IMR-90 (cell line): ENCODE measurements at regions of chr18 and their contacts with region 1.

Region 1: DNA sequence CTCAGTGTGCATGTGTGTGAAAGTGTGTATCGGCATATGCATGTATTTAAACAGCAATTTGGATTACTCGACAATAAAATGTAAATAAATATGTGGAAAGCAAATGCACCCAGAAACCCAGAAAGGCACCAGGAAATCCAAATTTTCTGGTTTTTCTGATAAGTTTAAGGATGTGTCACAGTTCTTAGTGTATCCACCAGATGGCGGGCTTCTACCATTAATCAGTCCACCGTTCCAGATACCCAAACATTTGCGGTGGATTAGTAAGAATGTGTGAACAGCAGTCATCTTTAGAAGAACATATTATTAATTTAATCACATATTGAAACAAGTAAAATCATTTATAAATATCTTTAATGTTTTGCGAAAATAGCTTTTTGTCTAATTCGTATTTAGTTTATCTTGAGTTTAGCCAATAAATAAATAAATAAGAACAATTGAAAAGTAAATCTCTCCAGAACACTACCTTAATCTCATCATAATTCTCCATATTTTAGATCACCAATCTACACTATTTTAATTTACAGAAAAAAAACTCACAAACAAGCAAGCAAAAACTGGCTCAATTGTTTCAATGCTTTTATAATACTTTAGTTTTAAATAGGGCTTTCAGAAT is 298.9 kb downstream of the DSEL start:
- DNase-seq: peak; percentile 78
- ATAC-seq: peak; percentile 95
- H3K4me3 ChIP-seq: no peak overlapping the region
- H3K27ac ChIP-seq: no peak overlapping the region
- H3K4me1 ChIP-seq: no peaks in the 10 kb centered on the region
- H3K27me3 ChIP-seq: no peaks in the 10 kb centered on the region
- CTCF ChIP-seq: peak; percentile 86
- POLR2A ChIP-seq: 0 out of 2 replicates have a peak, but pooled peaks have one; percentile 32
- RAD21 ChIP-seq: peak; percentile 94

Region 2: DNA sequence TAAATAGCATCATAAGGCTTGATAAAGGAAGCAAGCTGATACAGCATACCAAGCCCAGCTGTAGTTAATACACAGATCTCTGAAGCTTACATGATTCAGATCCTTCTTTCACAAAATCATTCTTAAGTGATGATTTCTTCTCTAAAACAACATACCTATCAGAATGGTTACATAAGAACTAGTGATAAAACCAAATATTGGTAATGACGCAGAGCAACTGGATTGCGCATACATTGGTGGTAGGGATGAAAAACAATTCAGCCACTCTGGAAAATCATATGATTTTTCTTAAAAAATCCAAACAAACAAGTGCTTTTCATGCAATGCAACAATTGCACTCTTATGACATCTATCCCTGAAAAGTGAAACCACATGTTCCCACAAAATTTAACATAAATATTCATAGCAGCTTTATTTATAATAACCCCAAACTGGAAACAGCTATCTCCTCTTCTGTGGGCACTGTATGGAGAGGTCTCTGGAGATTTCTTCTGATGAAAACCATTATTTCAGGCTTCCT is 452.4 kb after region 1 on chr18:
- CTCF ChIA-PET with region 1: no interaction called
- POLR2A ChIA-PET with region 1: no interaction called
- dilution Hi-C with region 1: no loop called
- in situ Hi-C with region 1: no loop called
- intact Hi-C with region 1: loop called (anchors 2 kb)
- DNase-seq: peak; percentile 98
- ATAC-seq: peak; percentile 87
- H3K4me3 ChIP-seq: no peak overlapping the region
- H3K27ac ChIP-seq: peak overlapping the region; percentile 100
- H3K4me1 ChIP-seq: peaks cover 12% of the 10 kb centered on the region
- H3K27me3 ChIP-seq: no peaks in the 10 kb centered on the region
- CTCF ChIP-seq: no peak
- POLR2A ChIP-seq: no peak
- RAD21 ChIP-seq: 0 out of 2 replicates have a peak, but pooled peaks have one; percentile 2

Region 3: GRCh38 chr18:67938660-67939059 is 721.0 kb after region 1 on chr18:
- CTCF ChIA-PET with region 1: no interaction called
- POLR2A ChIA-PET with region 1: no interaction called
- dilution Hi-C with region 1: no loop called
- in situ Hi-C with region 1: no loop called
- intact Hi-C with region 1: loop called (anchors 10 kb)
- DNase-seq: peak; percentile 84
- ATAC-seq: peak; percentile 97
- H3K4me3 ChIP-seq: no peak overlapping the region
- H3K27ac ChIP-seq: peak overlapping the region; percentile 99; the same call in 1 of the 2 replicates
- H3K4me1 ChIP-seq: peaks cover 2% of the 10 kb centered on the region; the same call in 1 of the 2 replicates
- H3K27me3 ChIP-seq: no peaks in the 10 kb centered on the region
- CTCF ChIP-seq: no peak
- POLR2A ChIP-seq: no peak
- RAD21 ChIP-seq: no peak

Region 4: DNA sequence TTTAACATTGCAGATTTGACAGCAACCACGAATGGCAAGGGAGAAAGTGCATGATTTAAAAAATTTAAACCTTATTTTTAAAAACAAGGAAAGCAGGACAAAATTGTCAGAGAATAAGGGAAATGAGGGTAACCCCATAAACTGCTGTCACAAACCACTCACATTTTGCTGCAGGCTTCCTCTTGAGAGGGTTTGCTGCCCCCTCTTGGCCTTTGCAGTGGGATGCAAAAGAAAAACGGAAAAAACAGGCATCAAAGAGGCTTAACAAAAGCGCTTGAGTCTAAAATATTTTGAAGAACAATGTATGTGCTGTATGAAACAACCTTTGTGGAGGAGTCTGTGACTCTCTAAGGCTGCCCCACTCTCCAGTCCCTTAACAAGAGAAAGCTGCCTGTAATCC is 1405.7 kb after region 1 on chr18:
- CTCF ChIA-PET with region 1: no interaction called
- POLR2A ChIA-PET with region 1: no interaction called
- dilution Hi-C with region 1: no loop called
- in situ Hi-C with region 1: no loop called
- intact Hi-C with region 1: loop called (anchors 1 kb)
- DNase-seq: peak; percentile 84
- ATAC-seq: peak; percentile 90
- H3K4me3 ChIP-seq: no peak overlapping the region
- H3K27ac ChIP-seq: no peak overlapping the region
- H3K4me1 ChIP-seq: no peaks in the 10 kb centered on the region
- H3K27me3 ChIP-seq: no peaks in the 10 kb centered on the region
- CTCF ChIP-seq: peak; percentile 89
- POLR2A ChIP-seq: peak; percentile 50; the same call in 1 of the 2 replicates
- RAD21 ChIP-seq: peak; percentile 96

Region 5: DNA sequence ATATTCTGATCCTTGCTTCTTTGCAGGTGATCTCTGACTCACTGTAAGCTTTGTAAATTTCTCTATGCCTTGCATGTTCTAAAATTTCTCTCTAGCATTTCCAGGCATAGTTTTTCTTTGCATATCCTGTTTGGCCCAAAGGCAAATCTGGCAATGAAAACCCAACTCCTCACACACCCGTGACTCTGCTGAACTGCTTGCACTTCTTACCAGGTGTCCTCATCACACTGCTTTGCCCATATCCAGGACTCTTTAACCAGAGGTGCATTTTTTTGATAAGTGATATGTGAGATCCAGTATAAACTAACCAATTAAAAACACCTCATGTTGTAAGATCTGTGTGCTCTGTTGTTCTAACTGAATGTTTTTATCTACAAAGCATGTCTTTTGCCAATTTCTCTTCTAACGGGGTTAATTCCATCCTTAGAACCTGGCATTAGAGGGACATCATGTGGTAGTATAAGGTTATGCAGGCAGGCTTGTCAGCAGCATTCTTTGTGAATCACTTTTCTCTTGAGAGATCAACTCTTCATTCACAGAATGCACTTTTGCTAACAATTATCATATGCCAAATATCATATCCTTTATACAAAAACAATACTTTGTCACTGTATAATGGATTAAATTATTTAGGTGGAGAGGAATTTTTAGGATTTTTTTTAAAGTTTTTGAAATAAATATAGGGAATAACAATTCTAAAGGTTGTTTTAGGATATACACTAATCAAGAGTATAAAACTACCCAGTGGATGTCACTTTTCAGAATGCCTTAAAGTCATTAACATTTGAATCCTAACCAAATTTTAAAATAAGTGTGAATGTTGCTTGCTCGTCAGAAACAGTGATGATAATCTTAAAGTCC is 1518.1 kb after region 1 on chr18:
- CTCF ChIA-PET with region 1: no interaction called
- POLR2A ChIA-PET with region 1: no interaction called
- dilution Hi-C with region 1: no loop called
- in situ Hi-C with region 1: no loop called
- intact Hi-C with region 1: loop called (anchors 2 kb)
- DNase-seq: peak; percentile 74
- ATAC-seq: peak; percentile 94
- H3K4me3 ChIP-seq: no peak overlapping the region
- H3K27ac ChIP-seq: no peak overlapping the region
- H3K4me1 ChIP-seq: no peaks in the 10 kb centered on the region
- H3K27me3 ChIP-seq: no peaks in the 10 kb centered on the region
- CTCF ChIP-seq: peak; percentile 83
- POLR2A ChIP-seq: no peak
- RAD21 ChIP-seq: peak; percentile 90